B cell (primary cell): ENCODE measurements at regions of chr4 and their contacts with region 1.

Region 1: GRCh38 chr4:139554893-139555704 is 920 bp downstream of the SETD7 start:
- DNase-seq: peak; percentile 91
- ATAC-seq: peak; percentile 60
- H3K4me3 ChIP-seq: peak overlapping the region; percentile 73 to 96 (median 89)
- H3K4me3 Mint-ChIP-seq: peak overlapping the region; percentile 100
- H3K27ac ChIP-seq: peak overlapping the region; percentile 93 to 98
- H3K27ac Mint-ChIP-seq: peak overlapping the region; percentile 100
- H3K4me1 ChIP-seq: peaks cover 29 to 31% of the 10 kb centered on the region in 2 donors
- H3K4me1 Mint-ChIP-seq: peaks cover 63% of the 10 kb centered on the region
- H3K27me3 ChIP-seq: no peaks in the 10 kb centered on the region
- H3K27me3 Mint-ChIP-seq: no peaks in the 10 kb centered on the region
- CTCF ChIP-seq: no peak

Region 2: GRCh38 chr4:139015269-139015947 is 539.7 kb before region 1 on chr4 and contains the start of gene NOCT:
- CTCF ChIA-PET with region 1: no interaction called
- POLR2A ChIA-PET with region 1: interaction called, 3 read pairs
- intact Hi-C with region 1: loop called (anchors 2 kb)
- DNase-seq: peak; percentile 97
- ATAC-seq: peak; percentile 92
- H3K4me3 ChIP-seq: peak within 1 kb of the TSS; percentile 56 to 86 (median 78)
- H3K4me3 Mint-ChIP-seq: peak within 1 kb of the TSS; percentile 92
- H3K27ac ChIP-seq: peak within 1 kb of the TSS; percentile 88 to 98
- H3K27ac Mint-ChIP-seq: peak within 1 kb of the TSS; percentile 98
- H3K4me1 ChIP-seq: peaks cover 14 to 18% of the 10 kb centered on the region in 2 donors
- H3K4me1 Mint-ChIP-seq: peaks cover 28% of the 10 kb centered on the region
- H3K27me3 ChIP-seq: no peaks in the 10 kb centered on the region
- H3K27me3 Mint-ChIP-seq: no peaks in the 10 kb centered on the region
- CTCF ChIP-seq: no peak
- total RNA-seq, gene NOCT: 2.6 and 3.0 TPM in 2 replicates

Region 3: GRCh38 chr4:139453371-139454110 is 101.6 kb before region 1 on chr4:
- CTCF ChIA-PET with region 1: interaction called, 3 read pairs
- POLR2A ChIA-PET with region 1: interaction called, 16 read pairs
- intact Hi-C with region 1: loop called (anchors 1 kb)
- DNase-seq: peak; percentile 98
- ATAC-seq: peak; percentile 87
- H3K4me3 ChIP-seq: peak overlapping the region; percentile 64 to 99 (median 93)
- H3K4me3 Mint-ChIP-seq: peak overlapping the region; percentile 96
- H3K27ac ChIP-seq: peak overlapping the region; percentile 97 to 98
- H3K27ac Mint-ChIP-seq: peak overlapping the region; percentile 99
- H3K4me1 ChIP-seq: peaks cover 28 to 34% of the 10 kb centered on the region in 2 donors
- H3K4me1 Mint-ChIP-seq: peaks cover 51% of the 10 kb centered on the region
- H3K27me3 ChIP-seq: no peaks in the 10 kb centered on the region
- H3K27me3 Mint-ChIP-seq: no peaks in the 10 kb centered on the region
- CTCF ChIP-seq: peak; percentile 42

Region 4: DNA sequence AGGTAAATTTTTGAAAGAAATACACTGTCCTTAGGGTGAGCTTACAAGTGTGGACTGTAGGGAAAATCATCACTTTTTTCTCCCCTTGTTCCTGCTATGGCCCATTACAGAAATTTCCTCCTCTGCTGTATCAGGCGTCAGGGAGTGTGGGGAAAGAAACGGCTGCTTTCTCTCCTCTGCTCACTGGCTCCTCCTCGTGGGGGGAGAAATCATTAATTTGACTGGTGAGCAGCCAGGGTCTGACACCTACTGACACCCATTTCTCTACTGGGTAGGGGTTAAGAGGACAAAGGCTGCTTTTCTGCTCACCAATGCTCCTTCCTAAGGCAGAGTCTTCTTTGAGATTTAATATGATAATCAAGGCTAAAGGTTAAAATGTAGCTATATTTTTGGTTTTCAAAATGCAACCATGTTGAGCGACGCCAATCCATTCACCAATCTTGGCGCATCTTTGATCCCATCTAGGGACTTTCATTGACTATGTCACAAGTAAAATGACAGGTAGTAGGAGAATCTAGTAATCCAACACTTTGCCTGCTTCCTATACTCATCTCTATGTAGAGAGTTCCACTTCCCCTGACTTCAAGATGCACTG is 24.2 kb before region 1 on chr4:
- CTCF ChIA-PET with region 1: interaction called, 24 read pairs
- POLR2A ChIA-PET with region 1: no interaction called
- intact Hi-C with region 1: loop called (anchors 2 kb)
- DNase-seq: peak; percentile 66
- ATAC-seq: peak; percentile 76
- H3K4me3 ChIP-seq: no peak overlapping the region
- H3K4me3 Mint-ChIP-seq: no peak overlapping the region
- H3K27ac ChIP-seq: no peak overlapping the region
- H3K27ac Mint-ChIP-seq: no peak overlapping the region
- H3K4me1 ChIP-seq: no peaks in the 10 kb centered on the region
- H3K4me1 Mint-ChIP-seq: peaks cover 3% of the 10 kb centered on the region
- H3K27me3 ChIP-seq: no peaks in the 10 kb centered on the region
- H3K27me3 Mint-ChIP-seq: no peaks in the 10 kb centered on the region
- CTCF ChIP-seq: peak; percentile 82

Region 5: DNA sequence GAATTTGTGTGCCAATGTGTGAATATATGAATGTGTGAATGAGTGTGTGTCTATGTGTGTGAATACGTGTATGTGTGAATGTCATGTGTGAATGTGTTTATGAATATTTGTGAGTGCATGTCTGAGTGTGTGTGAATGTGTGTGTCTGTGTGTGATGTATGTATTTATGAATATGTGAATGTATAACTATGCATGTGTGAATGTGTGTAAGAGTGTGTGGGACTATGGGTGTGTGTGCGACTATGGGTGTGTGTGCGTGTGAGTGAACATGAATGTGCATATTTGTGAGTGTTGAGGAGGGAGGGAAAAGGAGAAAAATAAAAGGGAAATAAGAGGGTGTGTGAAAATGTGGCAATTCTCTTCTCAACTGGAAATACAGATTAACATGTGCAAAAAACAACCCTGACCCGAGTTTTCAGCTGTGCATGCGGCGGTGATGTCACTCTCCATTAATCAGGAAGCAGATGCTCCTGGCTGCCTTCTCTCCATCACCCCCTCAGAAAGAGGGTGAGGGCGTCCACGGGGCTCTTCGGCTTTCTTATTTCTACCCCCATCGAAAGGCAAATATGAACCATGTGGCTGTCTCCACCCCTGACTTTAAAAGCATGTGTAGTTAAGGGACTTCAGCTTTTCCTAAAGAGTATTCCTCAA is 379.1 kb after region 1 on chr4:
- CTCF ChIA-PET with region 1: no interaction called
- POLR2A ChIA-PET with region 1: no interaction called
- intact Hi-C with region 1: no loop called
- DNase-seq: no peak
- ATAC-seq: no peak
- H3K4me3 ChIP-seq: no peak overlapping the region
- H3K4me3 Mint-ChIP-seq: no peak overlapping the region
- H3K27ac ChIP-seq: no peak overlapping the region
- H3K27ac Mint-ChIP-seq: no peak overlapping the region
- H3K4me1 ChIP-seq: no peaks in the 10 kb centered on the region
- H3K4me1 Mint-ChIP-seq: no peaks in the 10 kb centered on the region
- H3K27me3 ChIP-seq: no peaks in the 10 kb centered on the region
- H3K27me3 Mint-ChIP-seq: peaks cover 3% of the 10 kb centered on the region
- CTCF ChIP-seq: no peak

Region 6: DNA sequence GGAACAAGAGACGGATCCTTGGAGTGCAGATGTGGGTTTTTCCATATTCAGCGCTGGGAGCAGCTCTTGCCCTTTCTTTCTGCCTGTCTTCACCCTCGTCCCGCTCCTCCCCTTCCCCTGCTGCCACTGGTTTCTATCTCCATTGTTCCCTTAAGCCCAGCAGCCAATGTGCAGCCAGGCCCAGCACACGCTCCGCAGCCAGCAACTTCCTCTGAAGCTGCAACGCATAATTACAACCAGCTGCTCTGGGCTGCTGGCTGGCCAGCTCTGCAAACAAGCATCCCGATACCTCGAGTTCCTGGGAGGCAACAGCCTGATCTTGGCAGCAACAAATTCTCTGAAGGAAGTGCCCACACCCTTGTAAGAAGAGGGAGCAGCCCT is 682.5 kb after region 1 on chr4:
- CTCF ChIA-PET with region 1: no interaction called
- POLR2A ChIA-PET with region 1: no interaction called
- intact Hi-C with region 1: no loop called
- DNase-seq: peak; percentile 19
- ATAC-seq: no peak
- H3K4me3 ChIP-seq: no peak overlapping the region
- H3K4me3 Mint-ChIP-seq: peak overlapping the region; percentile 15
- H3K27ac ChIP-seq: no peak overlapping the region
- H3K27ac Mint-ChIP-seq: peak overlapping the region; percentile 21
- H3K4me1 ChIP-seq: peaks cover 53 to 55% of the 10 kb centered on the region in 2 donors
- H3K4me1 Mint-ChIP-seq: peaks cover 62% of the 10 kb centered on the region
- H3K27me3 ChIP-seq: peaks cover 0 to 6% (median 2%) of the 10 kb centered on the region in 4 experiments
- H3K27me3 Mint-ChIP-seq: peaks cover 27% of the 10 kb centered on the region
- CTCF ChIP-seq: no peak

Region 7: GRCh38 chr4:140373328-140374129 is 818.4 kb after region 1 on chr4 and contains the start of gene SCOC:
- CTCF ChIA-PET with region 1: no interaction called
- POLR2A ChIA-PET with region 1: no interaction called
- intact Hi-C with region 1: loop called (anchors 2 kb)
- DNase-seq: peak; percentile 97
- ATAC-seq: peak; percentile 95
- H3K4me3 ChIP-seq: peak within 1 kb of the TSS; percentile 54 to 98 (median 93)
- H3K4me3 Mint-ChIP-seq: peak within 1 kb of the TSS; percentile 86
- H3K27ac ChIP-seq: peak within 1 kb of the TSS; percentile 74 to 86
- H3K27ac Mint-ChIP-seq: peak within 1 kb of the TSS; percentile 64
- H3K4me1 ChIP-seq: peaks cover 14 to 16% of the 10 kb centered on the region in 2 donors
- H3K4me1 Mint-ChIP-seq: peaks cover 25% of the 10 kb centered on the region
- H3K27me3 ChIP-seq: no peaks in the 10 kb centered on the region
- H3K27me3 Mint-ChIP-seq: no peaks in the 10 kb centered on the region
- CTCF ChIP-seq: no peak
- total RNA-seq, gene SCOC: 18.4 and 19.2 TPM in 2 replicates